ENCODE measurements at regions of chr5 and their contacts with region 1.

Region 1: GRCh38 chr5:153900703-153901395 is 137.9 kb downstream of the FAM114A2 start:
- DNase-seq: no peak
- H3K4me3 Mint-ChIP-seq: no peak overlapping the region
- H3K27ac Mint-ChIP-seq: no peak overlapping the region
- H3K4me1 Mint-ChIP-seq: no peaks in the 10 kb centered on the region
- H3K27me3 Mint-ChIP-seq: peaks cover 23% of the 10 kb centered on the region
- CTCF ChIP-seq: no peak

Region 2: GRCh38 chr5:152900332-152900731 is 1000.5 kb before region 1 on chr5:
- CTCF ChIA-PET with region 1: no interaction called
- intact Hi-C with region 1: no loop called
- DNase-seq: no peak
- H3K4me3 Mint-ChIP-seq: no peak overlapping the region
- H3K27ac Mint-ChIP-seq: no peak overlapping the region
- H3K4me1 Mint-ChIP-seq: no peaks in the 10 kb centered on the region
- H3K27me3 Mint-ChIP-seq: no peaks in the 10 kb centered on the region
- CTCF ChIP-seq: no peak

Region 3: DNA sequence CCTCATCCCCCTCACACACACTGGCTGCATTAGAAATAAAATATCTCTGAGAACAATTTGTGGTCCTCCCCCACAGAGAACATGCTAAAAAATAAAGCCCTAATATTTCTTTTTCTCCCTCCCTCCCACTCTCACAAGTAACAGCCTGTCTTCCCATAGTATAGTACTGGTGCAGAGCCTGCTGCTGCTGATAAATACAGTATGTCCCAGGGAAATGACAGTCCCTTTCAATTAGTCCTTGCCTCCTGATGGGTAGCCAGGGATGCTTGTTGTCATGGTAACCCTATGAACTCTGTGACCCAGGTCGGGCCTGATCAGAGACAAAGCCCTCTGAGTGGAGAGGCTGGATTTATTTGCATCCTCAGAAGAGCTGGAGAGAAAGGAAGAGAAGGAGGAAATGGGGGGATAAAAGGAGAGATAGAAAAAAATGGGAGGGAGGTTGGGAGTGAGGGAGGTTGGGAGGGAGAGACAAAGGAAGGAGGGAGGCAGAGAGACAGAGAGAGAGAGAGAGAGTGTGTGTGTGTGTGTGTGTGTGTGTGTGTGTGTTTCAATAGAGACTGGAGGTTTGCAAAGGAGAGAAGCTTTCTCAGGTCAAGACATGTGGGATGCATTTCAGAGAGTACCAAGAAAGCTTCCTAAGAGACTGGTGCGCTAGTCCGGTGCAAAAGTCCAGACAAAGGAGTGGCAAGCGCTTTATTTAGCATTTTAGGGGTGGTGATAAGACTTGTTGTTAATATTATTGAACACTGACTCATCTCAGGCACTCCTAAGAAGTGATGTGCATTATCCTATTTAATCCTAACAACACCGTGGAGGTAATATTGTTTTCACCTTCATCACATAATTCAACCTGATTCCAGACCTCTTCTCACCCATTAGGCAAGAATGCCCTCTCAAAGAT is 122.9 kb before region 1 on chr5:
- CTCF ChIA-PET with region 1: no interaction called
- intact Hi-C with region 1: no loop called
- DNase-seq: no peak
- H3K4me3 Mint-ChIP-seq: no peak overlapping the region
- H3K27ac Mint-ChIP-seq: no peak overlapping the region
- H3K4me1 Mint-ChIP-seq: no peaks in the 10 kb centered on the region
- H3K27me3 Mint-ChIP-seq: peaks cover 50% of the 10 kb centered on the region
- CTCF ChIP-seq: no peak

Region 4: GRCh38 chr5:153926201-153926600 is 25.4 kb after region 1 on chr5:
- CTCF ChIA-PET with region 1: no interaction called
- intact Hi-C with region 1: loop called (anchors 1 kb)
- DNase-seq: no peak
- H3K4me3 Mint-ChIP-seq: no peak overlapping the region
- H3K27ac Mint-ChIP-seq: no peak overlapping the region
- H3K4me1 Mint-ChIP-seq: no peaks in the 10 kb centered on the region
- H3K27me3 Mint-ChIP-seq: peaks cover 28% of the 10 kb centered on the region
- CTCF ChIP-seq: no peak